IMR-90 (cell line): ENCODE measurements at regions of chr20 and their contacts with region 1.

Region 1: DNA sequence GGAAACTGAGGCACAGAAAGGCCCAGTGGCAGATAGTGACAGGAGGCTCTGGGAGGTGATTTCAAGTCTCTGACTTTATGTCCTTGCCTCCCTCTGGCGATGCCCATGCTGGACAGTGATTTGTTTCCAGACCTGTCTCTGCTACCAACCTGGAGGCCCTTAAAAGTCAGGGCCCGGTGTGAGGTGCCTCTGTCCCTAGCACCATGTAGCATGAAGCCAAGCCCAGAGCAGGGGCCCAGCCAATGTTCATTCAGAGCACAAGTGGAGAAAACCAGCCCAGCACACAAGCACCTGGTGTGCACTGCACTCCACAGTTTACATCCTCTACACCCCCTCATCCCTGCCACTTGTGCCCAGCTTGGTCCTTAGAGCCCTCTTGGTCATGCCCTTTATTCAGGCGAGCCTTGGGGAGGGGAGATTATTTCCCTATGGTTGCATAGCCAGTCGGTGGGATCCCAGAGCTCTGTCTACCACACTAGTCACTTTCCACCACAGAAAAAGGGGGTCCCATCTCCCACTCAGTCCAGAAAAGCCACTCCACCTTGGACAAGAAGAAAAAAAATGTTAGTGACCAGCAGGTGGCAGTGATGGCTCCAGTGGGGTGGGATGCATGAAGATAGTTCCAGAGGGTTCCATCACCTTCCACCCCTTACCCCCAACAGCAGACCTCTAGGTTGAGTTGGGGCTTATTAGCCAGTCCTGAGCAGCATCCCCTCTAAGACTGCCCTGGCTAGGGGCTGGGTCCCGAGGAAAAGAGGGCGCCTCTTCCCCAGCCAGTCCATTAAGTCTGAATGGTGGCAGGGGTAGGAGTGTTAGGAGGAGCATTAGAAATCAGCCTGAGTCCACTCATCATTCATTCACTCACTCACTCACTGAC is 30.9 kb downstream of the KIAA1755 start:
- DNase-seq: no peak
- ATAC-seq: peak; percentile 67
- H3K4me3 ChIP-seq: no peak overlapping the region
- H3K27ac ChIP-seq: no peak overlapping the region
- H3K4me1 ChIP-seq: peaks cover 8% of the 10 kb centered on the region
- H3K27me3 ChIP-seq: no peaks in the 10 kb centered on the region
- CTCF ChIP-seq: peak; percentile 65
- POLR2A ChIP-seq: no peak
- RAD21 ChIP-seq: peak; percentile 79

Region 2: GRCh38 chr20:38290832-38291581 is 61.4 kb after region 1 on chr20:
- CTCF ChIA-PET with region 1: interaction called, 3 read pairs
- POLR2A ChIA-PET with region 1: no interaction called
- dilution Hi-C with region 1: no loop called
- in situ Hi-C with region 1: no loop called
- intact Hi-C with region 1: loop called (anchors 1 kb)
- DNase-seq: peak; percentile 95
- ATAC-seq: peak; percentile 86
- H3K4me3 ChIP-seq: no peak overlapping the region
- H3K27ac ChIP-seq: no peak overlapping the region
- H3K4me1 ChIP-seq: peaks cover 17% of the 10 kb centered on the region
- H3K27me3 ChIP-seq: peaks cover 4% of the 10 kb centered on the region
- CTCF ChIP-seq: peak; percentile 69
- POLR2A ChIP-seq: no peak
- RAD21 ChIP-seq: peak; percentile 71

Region 3: GRCh38 chr20:38304845-38305447 is 75.3 kb after region 1 on chr20:
- CTCF ChIA-PET with region 1: interaction called, 7 read pairs
- POLR2A ChIA-PET with region 1: no interaction called
- dilution Hi-C with region 1: no loop called
- in situ Hi-C with region 1: no loop called
- intact Hi-C with region 1: loop called (anchors 1 kb)
- DNase-seq: peak; percentile 38
- ATAC-seq: peak; percentile 86
- H3K4me3 ChIP-seq: no peak overlapping the region
- H3K27ac ChIP-seq: no peak overlapping the region
- H3K4me1 ChIP-seq: no peaks in the 10 kb centered on the region
- H3K27me3 ChIP-seq: peaks cover 21% of the 10 kb centered on the region
- CTCF ChIP-seq: peak; percentile 61
- POLR2A ChIP-seq: no peak
- RAD21 ChIP-seq: peak; percentile 70

Region 4: DNA sequence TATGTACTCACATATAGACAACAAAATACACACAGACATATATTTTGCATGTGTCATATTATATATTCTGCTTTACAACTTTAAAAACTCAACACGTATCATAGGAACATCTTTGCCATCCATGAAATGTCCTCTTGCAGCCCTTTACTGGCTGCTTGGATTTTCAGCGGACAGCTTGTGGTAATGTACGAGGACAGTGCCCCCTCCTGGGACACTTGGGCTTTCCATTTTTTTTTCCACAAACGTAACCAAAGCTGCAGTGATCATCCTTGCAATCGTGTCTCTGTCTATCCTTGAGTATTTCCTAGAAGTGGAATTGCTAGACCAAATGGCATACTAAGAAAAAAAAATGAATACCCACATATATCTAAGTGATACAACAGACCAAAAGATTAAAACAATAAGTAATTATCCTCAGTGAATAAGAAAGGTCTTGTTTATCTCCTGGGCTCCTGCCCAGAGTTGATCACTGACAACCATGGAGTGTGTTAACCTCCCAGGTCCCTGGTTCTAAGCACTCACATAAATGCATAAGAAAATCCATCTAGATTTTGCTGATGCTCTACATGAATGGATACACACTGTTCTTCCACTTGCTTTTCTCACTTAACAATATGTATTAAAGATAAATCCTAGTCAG is 92.5 kb after region 1 on chr20:
- CTCF ChIA-PET with region 1: interaction called, 3 read pairs
- POLR2A ChIA-PET with region 1: no interaction called
- dilution Hi-C with region 1: no loop called
- in situ Hi-C with region 1: no loop called
- intact Hi-C with region 1: loop called (anchors 1 kb)
- DNase-seq: peak; percentile 73
- ATAC-seq: peak; percentile 84
- H3K4me3 ChIP-seq: no peak overlapping the region
- H3K27ac ChIP-seq: no peak overlapping the region
- H3K4me1 ChIP-seq: no peaks in the 10 kb centered on the region
- H3K27me3 ChIP-seq: peaks cover 38% of the 10 kb centered on the region
- CTCF ChIP-seq: peak; percentile 77
- POLR2A ChIP-seq: no peak
- RAD21 ChIP-seq: peak; percentile 87

Region 5: DNA sequence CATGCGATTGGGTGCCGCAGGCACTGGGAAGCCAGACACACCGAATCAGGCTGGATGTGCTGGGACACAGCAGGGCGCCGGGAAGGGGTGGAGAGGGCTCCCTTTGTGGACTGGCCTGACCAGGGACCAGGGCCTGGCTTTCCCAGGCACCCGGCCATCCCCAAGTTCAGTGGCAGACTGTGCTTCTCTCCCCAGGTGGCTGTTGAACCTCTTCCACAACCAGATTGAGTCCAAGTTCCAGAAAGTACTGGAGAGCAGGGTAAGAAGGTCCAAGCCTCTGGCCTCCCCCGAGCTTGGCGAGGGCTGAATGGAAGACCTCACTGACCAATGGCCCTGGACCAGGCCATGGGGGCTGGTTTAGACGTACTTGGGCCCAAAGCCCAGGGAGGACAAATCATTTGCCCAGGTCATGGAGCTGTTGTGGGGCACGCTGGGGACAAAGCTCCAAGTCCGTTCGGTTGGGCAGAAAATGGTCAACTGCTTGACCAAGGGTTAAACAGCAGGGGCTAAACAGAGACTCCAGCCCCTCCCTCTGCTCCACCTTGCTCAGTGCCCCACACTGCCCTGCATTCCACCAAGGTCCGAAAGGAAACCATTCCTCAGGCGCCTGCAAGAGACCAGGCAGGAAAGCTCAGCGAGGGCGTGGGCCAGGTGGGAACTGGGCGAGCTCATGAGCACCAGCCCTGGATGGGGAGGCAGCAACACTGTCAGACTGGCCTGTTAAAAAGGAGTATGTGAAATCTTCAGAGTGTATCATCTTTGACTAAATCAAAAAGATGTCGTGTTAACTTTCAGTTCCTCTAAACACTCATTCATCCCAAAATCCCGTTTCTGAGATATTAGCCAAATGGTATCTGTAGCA is 125.8 kb after region 1 on chr20:
- CTCF ChIA-PET with region 1: interaction called, 4 read pairs
- POLR2A ChIA-PET with region 1: no interaction called
- dilution Hi-C with region 1: no loop called
- in situ Hi-C with region 1: no loop called
- intact Hi-C with region 1: loop called (anchors 1 kb)
- DNase-seq: no peak
- ATAC-seq: no peak
- H3K4me3 ChIP-seq: no peak overlapping the region
- H3K27ac ChIP-seq: no peak overlapping the region
- H3K4me1 ChIP-seq: no peaks in the 10 kb centered on the region; the same call in 1 of the 2 replicates
- H3K27me3 ChIP-seq: peaks cover 2% of the 10 kb centered on the region
- CTCF ChIP-seq: no peak
- POLR2A ChIP-seq: no peak
- RAD21 ChIP-seq: no peak

Region 6: GRCh38 chr20:38412877-38413577 is 183.4 kb after region 1 on chr20:
- CTCF ChIA-PET with region 1: interaction called, 4 read pairs
- POLR2A ChIA-PET with region 1: no interaction called
- dilution Hi-C with region 1: no loop called
- in situ Hi-C with region 1: no loop called
- intact Hi-C with region 1: loop called (anchors 1 kb)
- DNase-seq: no peak
- ATAC-seq: no peak
- H3K4me3 ChIP-seq: no peak overlapping the region
- H3K27ac ChIP-seq: no peak overlapping the region
- H3K4me1 ChIP-seq: no peaks in the 10 kb centered on the region
- H3K27me3 ChIP-seq: no peaks in the 10 kb centered on the region
- CTCF ChIP-seq: no peak
- POLR2A ChIP-seq: no peak
- RAD21 ChIP-seq: no peak